ENCODE measurements at regions of chr13 and their contacts with region 1.

Region 1: GRCh38 chr13:108549934-108550333 is 79.5 kb upstream of the MYO16 start:
- DNase-seq: no peak
- H3K4me3 ChIP-seq: no peak overlapping the region
- H3K27ac ChIP-seq: no peak overlapping the region
- H3K4me1 ChIP-seq: no peaks in the 10 kb centered on the region
- H3K27me3 ChIP-seq: no peaks in the 10 kb centered on the region
- CTCF ChIP-seq: no peak
- POLR2A ChIP-seq: no peak

Region 2: GRCh38 chr13:107600971-107601370 is 949.0 kb before region 1 on chr13:
- intact Hi-C with region 1: no loop called
- DNase-seq: no peak
- H3K4me3 ChIP-seq: no peak overlapping the region
- H3K27ac ChIP-seq: no peak overlapping the region
- H3K4me1 ChIP-seq: no peaks in the 10 kb centered on the region
- H3K27me3 ChIP-seq: no peaks in the 10 kb centered on the region
- CTCF ChIP-seq: no peak
- POLR2A ChIP-seq: no peak

Region 3: GRCh38 chr13:108495646-108496361 is 54.1 kb before region 1 on chr13:
- intact Hi-C with region 1: no loop called
- DNase-seq: no peak
- H3K4me3 ChIP-seq: peak overlapping the region; percentile 46 to 63
- H3K27ac ChIP-seq: no peak overlapping the region
- H3K4me1 ChIP-seq: peaks cover 4% of the 10 kb centered on the region
- H3K27me3 ChIP-seq: no peaks in the 10 kb centered on the region
- CTCF ChIP-seq: no peak
- POLR2A ChIP-seq: no peak

Region 4: GRCh38 chr13:108629181-108629752 is 79.3 kb after region 1 on chr13 and contains the start of gene MYO16:
- intact Hi-C with region 1: no loop called
- DNase-seq: no peak
- H3K4me3 ChIP-seq: no peak within 1 kb of the TSS
- H3K27ac ChIP-seq: no peak within 1 kb of the TSS
- H3K4me1 ChIP-seq: no peaks in the 10 kb centered on the region
- H3K27me3 ChIP-seq: no peaks in the 10 kb centered on the region
- CTCF ChIP-seq: no peak
- POLR2A ChIP-seq: no peak
- total RNA-seq, gene MYO16: 0.49 TPM

Region 5: GRCh38 chr13:108734680-108735079 is 184.7 kb after region 1 on chr13:
- intact Hi-C with region 1: no loop called
- DNase-seq: no peak
- H3K4me3 ChIP-seq: no peak overlapping the region
- H3K27ac ChIP-seq: no peak overlapping the region
- H3K4me1 ChIP-seq: no peaks in the 10 kb centered on the region
- H3K27me3 ChIP-seq: no peaks in the 10 kb centered on the region
- CTCF ChIP-seq: no peak
- POLR2A ChIP-seq: no peak

Region 6: DNA sequence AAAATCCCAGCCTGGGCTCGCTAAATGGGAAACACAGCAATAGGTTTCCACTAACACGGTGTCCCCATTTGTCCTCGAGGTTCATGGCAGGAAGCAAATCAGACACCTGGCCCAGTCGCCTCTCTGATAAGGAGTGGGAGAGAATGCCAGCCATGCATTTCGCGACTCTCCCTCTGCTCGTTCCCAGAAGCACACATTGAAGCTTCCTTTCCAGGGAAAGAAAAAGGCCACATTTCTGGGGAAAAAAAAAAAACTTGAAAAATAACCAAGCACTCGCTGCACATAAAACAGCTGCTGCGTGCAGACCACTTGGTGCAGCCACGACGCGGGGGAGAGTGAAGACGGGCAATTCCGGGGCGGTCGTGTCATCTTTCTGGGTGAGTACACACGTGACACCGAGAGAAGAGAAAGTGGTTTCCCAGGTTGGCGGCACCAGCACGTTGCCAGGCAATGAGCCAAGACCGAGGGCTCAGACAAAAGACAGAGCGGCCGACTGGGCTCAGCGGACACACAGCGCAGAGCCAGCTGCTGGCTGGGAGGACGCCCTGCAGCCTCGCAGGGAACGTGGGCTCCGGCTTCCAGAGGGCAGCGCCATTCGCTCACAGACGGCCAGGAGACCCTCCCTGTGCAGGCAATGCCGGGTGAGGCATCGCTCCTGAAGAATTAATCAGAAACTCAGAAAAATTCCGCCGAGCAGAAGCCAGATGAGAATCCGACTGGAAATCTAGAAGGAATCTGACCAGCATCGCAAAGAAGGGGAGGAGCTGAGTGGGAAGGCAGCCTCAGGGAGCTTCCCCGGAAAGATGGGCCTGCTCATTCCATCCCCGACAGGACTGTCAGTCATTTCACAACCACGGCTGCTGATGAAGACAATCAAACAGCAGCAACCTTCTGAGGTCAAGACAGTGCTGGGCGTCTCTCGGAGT is 1319.6 kb after region 1 on chr13:
- intact Hi-C with region 1: loop called (anchors 10 kb)
- DNase-seq: peak; percentile 80 to 88
- H3K4me3 ChIP-seq: peak overlapping the region; percentile 36 to 40
- H3K27ac ChIP-seq: peak overlapping the region; percentile 46
- H3K4me1 ChIP-seq: peaks cover 3% of the 10 kb centered on the region
- H3K27me3 ChIP-seq: no peaks in the 10 kb centered on the region
- CTCF ChIP-seq: no peak
- POLR2A ChIP-seq: no peak